SK-N-SH (cell line): ENCODE measurements at regions of chr7 and their contacts with region 1.

Region 1: GRCh38 chr7:29146057-29146706 is at the start of gene CPVL:
- DNase-seq: peak; percentile 62
- H3K4me3 ChIP-seq: peak within 1 kb of the TSS in 1 of 2 experiments; percentile 31; a peak in 2 of 4 replicates
- H3K27ac ChIP-seq: no peak within 1 kb of the TSS
- H3K4me1 ChIP-seq: peaks cover 0 to 11% of the 10 kb centered on the region in 2 experiments; a peak in 1 of 4 replicates
- H3K27me3 ChIP-seq: peaks cover 27% of the 10 kb centered on the region
- CTCF ChIP-seq: no peak
- EP300 ChIP-seq: no peak
- RAD21 ChIP-seq: no peak
- polyA plus RNA-seq, gene CPVL: 0.16 TPM in 1 of 2 replicates, not detected in the other

Region 2: GRCh38 chr7:28908775-28909174 is 237.4 kb before region 1 on chr7:
- CTCF ChIA-PET with region 1: no interaction called
- POLR2A ChIA-PET with region 1: no interaction called
- DNase-seq: no peak
- H3K4me3 ChIP-seq: no peak overlapping the region
- H3K27ac ChIP-seq: no peak overlapping the region
- H3K4me1 ChIP-seq: peaks cover 0 to 5% of the 10 kb centered on the region in 2 experiments; a peak in 2 of 4 replicates
- H3K27me3 ChIP-seq: peaks cover 5% of the 10 kb centered on the region; the same call in 1 of the 2 replicates
- CTCF ChIP-seq: no peak
- EP300 ChIP-seq: no peak
- RAD21 ChIP-seq: no peak

Region 3: GRCh38 chr7:29156907-29157452 is 10.8 kb after region 1 on chr7:
- CTCF ChIA-PET with region 1: interaction called, 16 read pairs
- POLR2A ChIA-PET with region 1: no interaction called
- DNase-seq: peak; percentile 39
- H3K4me3 ChIP-seq: no peak overlapping the region
- H3K27ac ChIP-seq: no peak overlapping the region
- H3K4me1 ChIP-seq: peaks cover 0 to 26% of the 10 kb centered on the region in 2 experiments; a peak in 2 of 4 replicates
- H3K27me3 ChIP-seq: no peaks in the 10 kb centered on the region
- CTCF ChIP-seq: no peak
- EP300 ChIP-seq: no peak
- RAD21 ChIP-seq: no peak

Region 4: DNA sequence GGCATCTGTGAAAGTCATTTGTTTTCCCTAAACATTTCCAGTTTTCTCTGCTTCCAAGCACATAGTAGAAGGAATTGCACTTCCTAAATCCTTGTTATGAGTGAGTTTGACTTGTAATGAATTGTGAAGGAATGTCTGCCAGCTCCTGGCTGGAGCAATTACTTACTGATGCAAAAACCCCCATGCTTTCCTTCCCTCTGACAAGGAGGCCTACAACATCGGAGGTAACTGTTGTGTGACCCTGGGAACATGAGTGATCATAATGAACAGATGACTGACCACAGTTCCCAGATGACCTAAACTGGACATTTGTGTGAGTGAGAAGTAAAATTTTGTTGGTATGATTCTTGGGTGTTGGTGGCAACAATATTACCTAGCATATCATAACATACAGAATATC is 21.5 kb after region 1 on chr7:
- CTCF ChIA-PET with region 1: no interaction called
- POLR2A ChIA-PET with region 1: no interaction called
- DNase-seq: no peak
- H3K4me3 ChIP-seq: no peak overlapping the region
- H3K27ac ChIP-seq: no peak overlapping the region
- H3K4me1 ChIP-seq: no peaks in the 10 kb centered on the region
- H3K27me3 ChIP-seq: no peaks in the 10 kb centered on the region
- CTCF ChIP-seq: no peak
- EP300 ChIP-seq: no peak
- RAD21 ChIP-seq: no peak

Region 5: GRCh38 chr7:29202651-29203069 is 56.5 kb after region 1 on chr7:
- CTCF ChIA-PET with region 1: no interaction called
- POLR2A ChIA-PET with region 1: no interaction called
- DNase-seq: no peak
- H3K4me3 ChIP-seq: no peak overlapping the region
- H3K27ac ChIP-seq: no peak overlapping the region
- H3K4me1 ChIP-seq: no peaks in the 10 kb centered on the region
- H3K27me3 ChIP-seq: 0 out of 2 replicates have a peak, but pooled peaks cover under 1% of the 10 kb centered on the region
- CTCF ChIP-seq: no peak
- EP300 ChIP-seq: no peak
- RAD21 ChIP-seq: no peak